ENCODE measurements at regions of chr12 and their contacts with region 1.

Region 1: GRCh38 chr12:124453419-124454351 is 113.7 kb downstream of the NCOR2 start:
- DNase-seq: peak; percentile 96 to 97
- H3K4me3 ChIP-seq: peak overlapping the region; percentile 35; the same call in 1 of the 2 replicates
- H3K27ac ChIP-seq: peak overlapping the region; percentile 75
- H3K4me1 ChIP-seq: peaks cover 32% of the 10 kb centered on the region
- H3K27me3 ChIP-seq: no peaks in the 10 kb centered on the region
- CTCF ChIP-seq: no peak

Region 2: DNA sequence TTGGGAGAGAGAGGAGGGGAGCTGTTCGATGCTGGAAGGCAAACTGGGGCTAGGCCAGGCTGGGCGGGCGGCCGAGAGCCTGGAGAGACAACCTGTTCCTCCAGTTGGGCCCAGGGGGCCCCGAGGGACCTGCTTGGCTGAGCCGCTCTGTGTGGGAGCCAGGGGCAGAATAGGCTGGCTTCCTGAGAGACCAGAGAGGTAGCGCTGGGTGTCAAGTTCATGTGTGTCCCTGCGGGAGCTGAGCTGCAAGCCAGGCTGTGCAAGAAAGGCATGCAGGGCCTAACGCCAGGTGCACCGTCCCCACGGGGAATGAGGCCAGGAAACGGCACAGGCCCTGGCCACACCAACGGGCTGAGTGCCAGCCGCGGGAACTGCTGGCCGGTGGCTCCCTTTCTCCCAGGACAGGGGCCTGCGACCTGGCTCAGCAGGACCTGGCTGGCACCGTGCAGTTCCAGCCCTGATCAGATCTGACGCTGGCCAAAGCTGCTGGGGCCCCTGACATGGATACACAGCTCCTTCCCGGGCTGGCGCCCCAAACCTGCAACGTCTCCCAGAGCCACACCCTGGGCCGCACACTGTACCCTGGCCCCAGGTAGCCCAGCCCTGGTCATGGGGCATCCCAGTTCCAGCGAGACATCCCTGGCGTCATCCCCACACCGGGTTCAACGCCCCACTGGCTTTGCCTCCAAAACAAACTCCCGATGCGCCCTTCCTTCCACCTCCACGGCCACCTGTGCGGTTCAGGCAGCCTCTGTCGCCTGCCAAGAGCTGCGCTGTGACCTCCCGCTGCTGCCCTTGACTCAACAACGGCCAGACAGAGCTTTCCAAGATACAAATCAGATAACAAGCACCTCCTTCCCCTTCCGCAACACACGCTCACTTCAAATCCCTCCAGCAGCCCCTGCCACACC is 93.8 kb before region 1 on chr12:
- CTCF ChIA-PET with region 1: no interaction called
- POLR2A ChIA-PET with region 1: no interaction called
- intact Hi-C with region 1: loop called (anchors 2 kb)
- DNase-seq: peak in 1 of 2 experiments; percentile 87
- H3K4me3 ChIP-seq: no peak overlapping the region
- H3K27ac ChIP-seq: no peak overlapping the region
- H3K4me1 ChIP-seq: no peaks in the 10 kb centered on the region
- H3K27me3 ChIP-seq: no peaks in the 10 kb centered on the region
- CTCF ChIP-seq: no peak

Region 3: GRCh38 chr12:124422570-124423523 is 30.8 kb before region 1 on chr12:
- CTCF ChIA-PET with region 1: no interaction called
- POLR2A ChIA-PET with region 1: interaction called, 5 read pairs
- intact Hi-C with region 1: loop called (anchors 1 kb)
- DNase-seq: peak; percentile 84 to 96
- H3K4me3 ChIP-seq: peak overlapping the region; percentile 49; the same call in 1 of the 2 replicates
- H3K27ac ChIP-seq: peak overlapping the region; percentile 91
- H3K4me1 ChIP-seq: peaks cover 32% of the 10 kb centered on the region
- H3K27me3 ChIP-seq: no peaks in the 10 kb centered on the region
- CTCF ChIP-seq: no peak

Region 4: DNA sequence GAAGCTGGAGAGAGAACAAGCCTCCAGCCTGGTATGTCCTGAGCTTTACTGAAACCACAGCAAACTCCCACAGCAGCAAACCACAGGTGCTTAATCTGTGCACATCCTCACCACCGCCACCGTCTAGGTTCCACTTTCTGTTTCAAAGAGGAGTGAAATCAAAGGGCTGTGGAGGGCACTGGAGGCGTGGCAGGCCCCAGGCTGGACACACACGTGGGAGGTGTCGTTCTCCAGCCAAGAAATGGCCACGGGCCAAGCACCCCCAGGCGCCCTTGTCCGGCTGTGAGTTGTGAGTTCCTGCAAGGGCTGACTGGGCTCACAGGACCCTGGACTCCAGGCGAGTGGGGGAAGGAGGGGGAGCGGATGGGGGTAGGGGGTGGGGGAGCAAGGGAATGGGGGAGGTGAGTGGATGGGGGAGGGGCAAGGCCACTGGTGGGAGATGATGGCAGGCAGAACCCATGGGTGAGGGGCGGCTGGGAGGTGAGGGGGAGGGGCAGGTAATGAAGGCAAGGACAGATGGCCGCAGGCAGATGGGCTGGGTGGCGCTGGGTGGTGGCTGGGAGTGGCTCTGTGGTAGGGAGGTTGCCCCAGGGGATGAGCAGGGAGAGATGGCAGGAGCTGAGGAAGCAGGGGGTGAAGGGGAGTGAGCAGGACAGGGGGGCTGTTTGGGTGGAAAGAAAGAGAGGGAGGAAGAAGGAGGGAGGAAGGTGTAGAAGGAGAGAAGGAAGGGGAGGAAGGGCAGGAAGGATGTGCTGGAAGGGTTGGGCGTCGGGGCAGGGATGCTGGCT is 27.0 kb after region 1 on chr12:
- CTCF ChIA-PET with region 1: no interaction called
- POLR2A ChIA-PET with region 1: no interaction called
- intact Hi-C with region 1: loop called (anchors 1 kb)
- DNase-seq: peak; percentile 91 to 98
- H3K4me3 ChIP-seq: no peak overlapping the region; the same call in 1 of the 2 replicates
- H3K27ac ChIP-seq: peak overlapping the region; percentile 59
- H3K4me1 ChIP-seq: peaks cover 28% of the 10 kb centered on the region
- H3K27me3 ChIP-seq: no peaks in the 10 kb centered on the region
- CTCF ChIP-seq: no peak

Region 5: DNA sequence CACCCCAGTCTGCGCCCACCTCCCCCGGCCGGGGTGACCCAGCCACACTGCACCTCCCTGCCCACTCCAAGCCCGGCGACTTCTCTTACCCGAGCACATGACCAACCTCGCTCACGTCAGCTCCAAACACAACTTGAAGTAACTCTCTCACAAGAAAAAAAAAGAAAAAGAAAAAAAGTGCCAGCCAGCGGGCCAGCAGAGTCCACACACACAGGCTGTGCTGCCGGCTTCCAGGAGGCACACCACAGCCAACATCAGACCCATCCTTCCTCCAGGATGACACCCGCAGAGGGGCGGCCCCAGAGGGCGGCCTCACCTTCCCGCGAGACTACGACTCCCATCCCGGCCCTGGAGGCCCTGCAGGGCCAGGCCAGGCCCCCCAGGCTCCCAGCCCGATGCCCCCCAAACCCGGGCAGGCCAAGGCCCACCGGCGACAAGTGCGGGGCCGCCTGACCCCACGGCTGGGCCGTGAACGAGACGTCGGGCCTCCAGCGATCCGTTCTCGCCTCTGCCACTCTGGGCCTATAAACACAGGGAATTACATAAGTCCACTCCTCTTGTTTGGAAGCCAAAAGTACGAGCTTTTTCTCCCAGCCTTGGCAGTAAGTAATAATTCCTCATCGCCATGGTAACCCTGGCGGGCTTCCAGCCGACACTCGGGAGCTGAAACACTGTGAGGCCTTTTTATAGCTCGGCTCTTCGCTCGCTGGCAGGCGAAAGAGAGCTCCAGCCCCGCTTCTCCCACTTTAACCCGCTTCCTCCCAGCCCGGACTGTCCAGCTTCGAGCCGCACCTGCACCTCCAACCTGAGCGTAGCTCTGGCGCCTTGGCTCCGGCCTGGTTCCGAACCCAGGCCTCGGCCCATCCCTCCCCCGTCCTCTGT is 64.6 kb after region 1 on chr12:
- CTCF ChIA-PET with region 1: interaction called, 3 read pairs
- POLR2A ChIA-PET with region 1: interaction called, 10 read pairs
- intact Hi-C with region 1: no loop called
- DNase-seq: peak; percentile 95
- H3K4me3 ChIP-seq: peak overlapping the region; percentile 59
- H3K27ac ChIP-seq: peak overlapping the region; percentile 91
- H3K4me1 ChIP-seq: peaks cover 54% of the 10 kb centered on the region
- H3K27me3 ChIP-seq: no peaks in the 10 kb centered on the region
- CTCF ChIP-seq: no peak

Measured in PC-9 (cell line).